WTC11 (cell line): ENCODE measurements at regions of chr10 and their contacts with region 1.

Region 1: GRCh38 chr10:129658376-129659074 is 191.5 kb downstream of the MGMT start:
- DNase-seq: peak; percentile 49
- ATAC-seq: peak; percentile 83
- H3K4me3 Mint-ChIP-seq: no peak overlapping the region
- H3K27ac Mint-ChIP-seq: no peak overlapping the region
- H3K4me1 Mint-ChIP-seq: peaks cover 45% of the 10 kb centered on the region
- H3K27me3 Mint-ChIP-seq: no peaks in the 10 kb centered on the region
- CTCF ChIP-seq: peak; percentile 71

Region 2: DNA sequence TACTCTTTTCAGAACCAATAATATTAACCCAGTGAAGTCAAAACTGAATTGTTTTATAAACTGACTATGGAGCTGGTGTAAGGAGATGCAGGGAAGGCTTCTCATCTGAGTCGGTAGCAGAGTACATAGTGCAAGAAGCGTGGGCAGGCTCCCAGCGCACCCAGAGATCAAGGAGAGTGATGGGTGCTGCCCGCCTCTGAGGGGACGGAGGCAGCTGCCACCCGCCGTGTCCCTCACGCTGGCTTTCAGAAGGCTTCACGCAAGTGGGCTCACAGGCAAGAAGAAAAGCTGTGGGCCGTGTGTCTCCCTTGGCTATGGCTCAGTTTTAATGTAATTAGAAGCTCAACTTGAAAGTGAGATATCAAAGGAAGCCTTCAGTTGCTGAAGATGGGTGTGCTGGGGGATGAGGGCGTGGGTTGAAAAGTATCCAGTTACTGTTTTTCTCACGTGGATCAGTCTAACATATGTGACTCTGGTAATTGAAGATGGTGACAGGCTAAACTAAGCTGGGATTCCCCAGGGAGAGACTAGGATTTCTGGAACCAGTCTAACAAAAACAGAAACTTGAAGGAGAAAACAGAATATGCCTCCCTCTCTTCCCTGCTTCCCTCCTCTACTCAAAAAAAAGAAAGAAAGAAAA is 31.6 kb before region 1 on chr10:
- CTCF ChIA-PET with region 1: interaction called, 11 read pairs
- POLR2A ChIA-PET with region 1: no interaction called
- DNase-seq: no peak
- ATAC-seq: no peak
- H3K4me3 Mint-ChIP-seq: no peak overlapping the region
- H3K27ac Mint-ChIP-seq: no peak overlapping the region
- H3K4me1 Mint-ChIP-seq: 0 out of 2 replicates have a peak, but pooled peaks cover 2% of the 10 kb centered on the region
- H3K27me3 Mint-ChIP-seq: no peaks in the 10 kb centered on the region
- CTCF ChIP-seq: no peak

Region 3: DNA sequence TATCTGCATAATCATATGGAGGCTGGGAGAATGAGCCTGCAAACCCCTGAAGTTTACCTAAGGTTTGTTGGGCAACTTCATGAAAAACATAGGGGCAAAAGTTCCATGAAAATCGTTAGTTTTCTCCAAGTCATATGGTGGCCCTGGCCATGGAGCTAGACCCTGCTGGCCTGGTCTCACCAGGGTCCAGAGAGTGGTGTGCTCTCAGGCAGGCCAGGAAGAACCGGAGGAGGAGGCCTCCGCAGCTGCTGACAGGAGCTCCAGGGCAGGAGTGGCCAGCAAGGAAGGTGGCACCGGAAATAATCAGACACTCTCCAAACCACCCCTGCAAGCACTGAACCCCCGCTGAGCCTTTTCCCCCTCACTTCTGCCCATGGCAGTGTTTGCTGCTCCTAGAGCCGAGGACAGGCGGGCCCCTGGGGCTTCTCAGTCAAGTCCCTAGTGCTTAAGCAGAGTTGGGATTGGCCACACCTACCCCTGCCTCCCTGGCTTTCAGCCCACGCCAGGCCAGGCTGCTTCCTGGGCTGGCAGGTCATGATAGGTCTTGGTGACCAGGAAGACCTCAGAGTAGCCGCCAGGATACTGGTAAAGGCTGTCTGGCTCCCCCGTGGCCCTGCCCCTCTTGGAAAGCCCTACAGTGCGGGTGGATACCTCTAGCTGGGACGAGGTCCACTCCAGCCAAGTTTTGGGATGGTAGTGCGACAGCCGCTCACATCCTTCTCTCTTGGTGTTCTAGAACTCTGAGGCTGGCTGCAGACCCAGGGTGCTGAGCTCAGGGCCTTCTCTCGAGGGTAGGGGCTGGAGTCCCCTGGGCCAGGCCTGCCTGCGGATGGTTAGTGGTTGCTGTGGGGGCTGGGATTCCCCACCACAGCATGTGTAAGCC is 51.3 kb after region 1 on chr10:
- CTCF ChIA-PET with region 1: interaction called, 14 read pairs
- POLR2A ChIA-PET with region 1: no interaction called
- DNase-seq: no peak
- ATAC-seq: no peak
- H3K4me3 Mint-ChIP-seq: no peak overlapping the region
- H3K27ac Mint-ChIP-seq: peak overlapping the region; percentile 49; the same call in 1 of the 2 replicates
- H3K4me1 Mint-ChIP-seq: peaks cover 50% of the 10 kb centered on the region
- H3K27me3 Mint-ChIP-seq: no peaks in the 10 kb centered on the region
- CTCF ChIP-seq: no peak

Region 4: GRCh38 chr10:129777687-129778086 is 119.2 kb after region 1 on chr10:
- CTCF ChIA-PET with region 1: no interaction called
- POLR2A ChIA-PET with region 1: no interaction called
- DNase-seq: no peak
- ATAC-seq: no peak
- H3K4me3 Mint-ChIP-seq: no peak overlapping the region
- H3K27ac Mint-ChIP-seq: no peak overlapping the region
- H3K4me1 Mint-ChIP-seq: no peaks in the 10 kb centered on the region
- H3K27me3 Mint-ChIP-seq: no peaks in the 10 kb centered on the region; the same call in 1 of the 2 replicates
- CTCF ChIP-seq: no peak